Activated T-helper 2 cell treated with anti-CD3 and anti-CD28 coated beads, Interferon-gamma antibody, Interleukin-2, Interleukin-4, amounts not matched to agents 10 μg/mL and 5 μg/mL and 100 μg/mL, durations not matched to agents 14 hours and 24 hours and 36 hours (primary cell): ENCODE measurements at regions of chr6 and their contacts with region 1.

Region 1: GRCh38 chr6:32894080-32895005 is 40.4 kb downstream of the PSMB9 start:
- DNase-seq: peak; percentile 95
- H3K4me3 Mint-ChIP-seq: peak overlapping the region; percentile 99
- H3K27ac Mint-ChIP-seq: peak overlapping the region; percentile 95
- H3K4me1 Mint-ChIP-seq: peaks cover 39% of the 10 kb centered on the region
- H3K27me3 Mint-ChIP-seq: no peaks in the 10 kb centered on the region

Region 2: GRCh38 chr6:32940656-32941213 is 46.4 kb after region 1 on chr6 and contains the start of gene HLA-DMB:
- intact Hi-C with region 1: loop called (anchors 2 kb)
- DNase-seq: peak; percentile 48
- H3K4me3 Mint-ChIP-seq: peak within 1 kb of the TSS; percentile 77
- H3K27ac Mint-ChIP-seq: peak within 1 kb of the TSS; percentile 91
- H3K4me1 Mint-ChIP-seq: peaks cover 55% of the 10 kb centered on the region
- H3K27me3 Mint-ChIP-seq: no peaks in the 10 kb centered on the region
- total RNA-seq, gene HLA-DMB: 1.3 and 1.4 TPM in 2 replicates

Region 3: GRCh38 chr6:32952817-32953739 is 58.7 kb after region 1 on chr6 and contains the start of gene HLA-DMA:
- intact Hi-C with region 1: no loop called
- DNase-seq: peak; percentile 76
- H3K4me3 Mint-ChIP-seq: peak within 1 kb of the TSS; percentile 80
- H3K27ac Mint-ChIP-seq: peak within 1 kb of the TSS; percentile 79
- H3K4me1 Mint-ChIP-seq: peaks cover 45% of the 10 kb centered on the region
- H3K27me3 Mint-ChIP-seq: no peaks in the 10 kb centered on the region
- total RNA-seq, gene HLA-DMA: 15.9 and 19.0 TPM in 2 replicates

Region 4: DNA sequence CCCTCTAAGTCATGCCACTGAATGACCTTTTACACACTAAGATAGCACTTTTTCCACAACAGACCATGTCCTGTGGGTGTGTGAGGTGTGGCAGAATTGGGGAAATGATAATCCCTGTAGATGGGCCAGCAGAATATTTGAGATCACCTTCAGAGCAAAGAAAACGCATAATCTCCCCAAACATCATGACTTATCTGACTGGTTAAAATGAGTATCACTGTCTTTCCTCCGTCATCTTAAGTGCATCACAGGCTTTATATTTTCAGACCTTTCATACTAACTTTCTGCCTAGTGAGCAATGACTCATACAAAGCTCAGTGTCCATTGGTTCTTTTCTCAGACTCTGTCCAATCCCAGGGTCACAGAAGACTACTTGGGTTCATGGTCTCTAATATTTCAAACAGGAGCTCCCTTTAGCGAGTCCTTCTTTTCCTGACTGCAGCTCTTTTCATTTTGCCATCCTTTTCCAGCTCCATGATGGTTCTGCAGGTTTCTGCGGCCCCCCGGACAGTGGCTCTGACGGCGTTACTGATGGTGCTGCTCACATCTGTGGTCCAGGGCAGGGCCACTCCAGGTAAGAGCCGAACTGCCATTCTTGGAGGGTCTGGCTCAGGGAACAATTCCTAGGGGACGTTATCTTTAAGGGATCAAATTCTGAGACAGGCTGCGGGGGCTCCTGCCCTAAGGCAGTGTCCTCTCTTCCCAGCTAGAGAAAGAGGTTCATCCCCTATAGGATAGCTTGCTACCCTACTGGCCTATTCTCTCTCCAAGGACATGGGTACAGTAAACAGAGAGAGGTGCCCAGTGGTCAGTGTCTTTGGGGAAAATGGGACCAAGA is 181.4 kb after region 1 on chr6 and contains the start of gene HLA-DPB1:
- intact Hi-C with region 1: loop called (anchors 5 kb)
- DNase-seq: peak; percentile 26
- H3K4me3 Mint-ChIP-seq: peak within 1 kb of the TSS; percentile 75
- H3K27ac Mint-ChIP-seq: peak within 1 kb of the TSS; percentile 71
- H3K4me1 Mint-ChIP-seq: peaks cover 45% of the 10 kb centered on the region
- H3K27me3 Mint-ChIP-seq: no peaks in the 10 kb centered on the region
- total RNA-seq, gene HLA-DPB1: 11.8 and 12.6 TPM in 2 replicates